T-cell (primary cell): ENCODE measurements at regions of chr10 and their contacts with region 1.

Region 1: DNA sequence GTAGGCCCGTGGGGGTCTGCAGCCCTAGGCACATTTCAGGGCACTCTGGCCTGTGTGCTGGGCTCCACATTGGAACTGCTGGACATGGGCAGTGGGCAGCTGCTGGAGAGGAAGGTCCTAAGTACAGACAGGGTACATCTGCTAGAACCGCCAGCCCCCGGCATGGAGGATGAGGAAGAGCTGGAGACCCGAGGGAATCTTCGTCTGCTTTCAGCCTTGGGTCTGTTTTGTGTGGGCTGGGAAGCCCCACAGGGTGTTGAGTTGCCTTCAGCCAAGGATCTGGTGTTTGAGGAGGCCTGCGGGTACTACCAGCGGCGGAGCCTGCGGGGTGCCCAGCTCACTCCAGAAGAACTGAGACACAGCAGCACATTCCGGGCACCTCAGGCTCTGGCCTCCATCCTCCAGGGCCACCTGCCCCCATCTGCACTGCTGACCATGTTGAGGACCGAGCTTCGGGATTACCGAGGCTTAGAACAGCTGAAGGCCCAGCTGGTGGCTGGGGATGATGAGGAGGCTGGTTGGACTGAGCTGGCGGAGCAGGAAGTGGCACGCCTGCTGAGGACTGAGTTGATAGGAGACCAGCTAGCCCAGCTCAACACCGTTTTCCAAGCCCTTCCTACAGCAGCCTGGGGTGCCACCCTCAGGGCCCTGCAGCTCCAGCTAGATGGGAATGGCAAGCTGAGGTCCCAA is 1.4 kb downstream of the HPS6 start:
- DNase-seq: no peak
- ATAC-seq: no peak
- H3K4me3 ChIP-seq: peak overlapping the region; percentile 55 to 86
- H3K4me3 Mint-ChIP-seq: peak overlapping the region; percentile 80 to 88 (median 85)
- H3K27ac ChIP-seq: peak overlapping the region; percentile 61
- H3K27ac Mint-ChIP-seq: peak overlapping the region; percentile 84 to 89
- H3K4me1 ChIP-seq: peaks cover 4 to 34% of the 10 kb centered on the region in 2 experiments
- H3K4me1 Mint-ChIP-seq: peaks cover 32 to 40% (median 37%) of the 10 kb centered on the region in 3 donors
- H3K27me3 ChIP-seq: no peaks in the 10 kb centered on the region
- H3K27me3 Mint-ChIP-seq: no peaks in the 10 kb centered on the region

Region 2: GRCh38 chr10:102114861-102115618 is 48.5 kb after region 1 on chr10:
- CTCF ChIA-PET with region 1: no interaction called
- POLR2A ChIA-PET with region 1: interaction called in 1 of 2 experiments, 12 read pairs
- DNase-seq: peak; percentile 70 to 87 (median 78)
- ATAC-seq: peak; percentile 74 to 77 (median 75)
- H3K4me3 ChIP-seq: peak overlapping the region; percentile 59 to 74
- H3K4me3 Mint-ChIP-seq: peak overlapping the region; percentile 84 to 87 (median 86)
- H3K27ac ChIP-seq: peak overlapping the region; percentile 64
- H3K27ac Mint-ChIP-seq: peak overlapping the region; percentile 77 to 95
- H3K4me1 ChIP-seq: peaks cover 40 to 75% of the 10 kb centered on the region in 2 experiments
- H3K4me1 Mint-ChIP-seq: peaks cover 65 to 69% (median 67%) of the 10 kb centered on the region in 3 donors
- H3K27me3 ChIP-seq: no peaks in the 10 kb centered on the region
- H3K27me3 Mint-ChIP-seq: no peaks in the 10 kb centered on the region

Region 3: GRCh38 chr10:102267748-102268147 is 201.2 kb after region 1 on chr10:
- CTCF ChIA-PET with region 1: no interaction called
- POLR2A ChIA-PET with region 1: no interaction called
- DNase-seq: no peak
- ATAC-seq: no peak
- H3K4me3 ChIP-seq: no peak overlapping the region
- H3K4me3 Mint-ChIP-seq: no peak overlapping the region
- H3K27ac ChIP-seq: no peak overlapping the region
- H3K27ac Mint-ChIP-seq: peak overlapping the region; percentile 20 to 22
- H3K4me1 ChIP-seq: peaks cover 0 to 9% of the 10 kb centered on the region in 2 experiments
- H3K4me1 Mint-ChIP-seq: peaks cover 52 to 71% (median 64%) of the 10 kb centered on the region in 3 donors
- H3K27me3 ChIP-seq: no peaks in the 10 kb centered on the region
- H3K27me3 Mint-ChIP-seq: no peaks in the 10 kb centered on the region